ENCODE measurements at regions of chr19 and their contacts with region 1.

Region 1: DNA sequence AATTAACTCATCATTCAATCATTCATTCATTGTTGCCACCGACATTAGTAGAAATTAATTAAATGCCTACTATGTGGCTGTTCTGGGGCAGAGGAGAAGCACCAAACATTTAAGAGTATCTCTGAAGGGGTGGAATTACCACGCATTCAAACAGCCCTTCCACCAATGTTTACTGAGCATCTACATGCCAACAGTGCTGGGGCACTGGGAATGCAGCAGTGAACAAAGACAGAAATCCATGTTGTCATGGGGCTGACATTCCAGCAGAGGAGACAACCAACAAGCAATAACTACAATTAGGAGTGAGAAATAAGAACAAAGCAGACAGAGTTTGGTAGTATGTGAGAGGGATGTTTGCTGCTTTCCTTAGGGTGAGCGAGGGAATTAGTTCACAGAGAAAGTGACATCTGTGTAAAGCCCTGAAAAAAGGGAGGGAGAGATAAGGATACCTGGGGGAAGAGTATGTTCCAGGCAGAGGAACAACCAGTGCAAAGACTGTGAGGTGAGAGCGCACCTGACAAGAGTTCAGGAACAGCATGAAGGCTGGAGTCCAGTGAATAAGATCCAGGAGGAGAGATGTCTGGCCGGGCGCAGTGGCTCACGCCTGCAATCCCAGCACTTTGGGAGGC is 1.3 kb upstream of the PAK4 start:
- DNase-seq: no peak
- H3K4me3 ChIP-seq: no peak overlapping the region
- H3K27ac ChIP-seq: no peak overlapping the region
- H3K27me3 ChIP-seq: peaks cover 2% of the 10 kb centered on the region
- CTCF ChIP-seq: no peak

Region 2: GRCh38 chr19:39110263-39110967 is 13.8 kb before region 1 on chr19:
- CTCF ChIA-PET with region 1: interaction called, 18 read pairs
- POLR2A ChIA-PET with region 1: no interaction called
- DNase-seq: no peak
- H3K4me3 ChIP-seq: no peak overlapping the region
- H3K27ac ChIP-seq: no peak overlapping the region
- H3K27me3 ChIP-seq: peaks cover 20% of the 10 kb centered on the region
- CTCF ChIP-seq: peak; percentile 72

Region 3: DNA sequence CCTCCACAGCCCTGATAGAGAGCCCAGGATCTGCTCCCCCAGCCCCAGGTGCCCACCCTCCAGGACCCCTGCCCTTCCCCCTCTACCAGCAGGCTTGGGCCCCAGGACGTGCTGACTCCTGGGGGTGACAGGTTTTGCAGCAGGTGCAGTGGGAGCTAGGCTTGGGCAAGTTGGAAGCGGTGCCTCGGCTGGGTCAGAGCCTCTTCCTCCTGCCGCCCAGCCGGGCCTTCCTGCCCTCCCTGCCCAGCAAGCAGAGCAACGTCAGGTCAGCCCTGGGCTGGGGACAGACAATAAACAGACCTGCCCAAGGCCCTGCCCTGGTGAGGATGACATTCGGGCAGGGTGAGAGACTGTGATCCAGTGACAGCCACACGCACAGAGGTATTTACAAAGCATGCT is 63.3 kb after region 1 on chr19:
- CTCF ChIA-PET with region 1: interaction called, 17 read pairs
- POLR2A ChIA-PET with region 1: no interaction called
- DNase-seq: no peak
- H3K4me3 ChIP-seq: no peak overlapping the region
- H3K27ac ChIP-seq: no peak overlapping the region
- H3K27me3 ChIP-seq: peaks cover 3% of the 10 kb centered on the region
- CTCF ChIP-seq: no peak

Region 4: GRCh38 chr19:39328046-39328705 is 203.9 kb after region 1 on chr19:
- CTCF ChIA-PET with region 1: interaction called, 91 read pairs
- POLR2A ChIA-PET with region 1: no interaction called
- DNase-seq: peak; percentile 30
- H3K4me3 ChIP-seq: no peak overlapping the region
- H3K27ac ChIP-seq: no peak overlapping the region
- H3K27me3 ChIP-seq: peaks cover 12% of the 10 kb centered on the region
- CTCF ChIP-seq: peak; percentile 97

Region 5: GRCh38 chr19:39341719-39342604 is 217.7 kb after region 1 on chr19 and contains the start of gene SAMD4B:
- CTCF ChIA-PET with region 1: interaction called, 10 read pairs
- POLR2A ChIA-PET with region 1: no interaction called
- DNase-seq: peak; percentile 97
- H3K4me3 ChIP-seq: peak within 1 kb of the TSS; percentile 80
- H3K27ac ChIP-seq: peak within 1 kb of the TSS; percentile 52
- H3K27me3 ChIP-seq: no peaks in the 10 kb centered on the region
- CTCF ChIP-seq: peak; percentile 65
- polyA plus RNA-seq, gene SAMD4B: 33.4 and 47.3 TPM in 2 replicates

Region 6: GRCh38 chr19:39590265-39590664 is 466.0 kb after region 1 on chr19:
- CTCF ChIA-PET with region 1: no interaction called
- POLR2A ChIA-PET with region 1: no interaction called
- DNase-seq: no peak
- H3K4me3 ChIP-seq: no peak overlapping the region
- H3K27ac ChIP-seq: no peak overlapping the region
- H3K27me3 ChIP-seq: no peaks in the 10 kb centered on the region
- CTCF ChIP-seq: no peak

Measured in AG04450 (cell line).